ENCODE measurements at regions of chr2 and their contacts with region 1.

Region 1: GRCh38 chr2:133844214-133844892 is 276.1 kb upstream of the NCKAP5 start:
- DNase-seq: no peak
- H3K4me3 ChIP-seq: no peak overlapping the region
- CTCF ChIP-seq: peak; percentile 80

Region 2: GRCh38 chr2:132547074-132547687 is 1297.2 kb before region 1 on chr2:
- CTCF ChIA-PET with region 1: interaction called, 21 read pairs
- POLR2A ChIA-PET with region 1: no interaction called
- DNase-seq: peak; percentile 26
- H3K4me3 ChIP-seq: no peak overlapping the region
- CTCF ChIP-seq: peak; percentile 70

Region 3: DNA sequence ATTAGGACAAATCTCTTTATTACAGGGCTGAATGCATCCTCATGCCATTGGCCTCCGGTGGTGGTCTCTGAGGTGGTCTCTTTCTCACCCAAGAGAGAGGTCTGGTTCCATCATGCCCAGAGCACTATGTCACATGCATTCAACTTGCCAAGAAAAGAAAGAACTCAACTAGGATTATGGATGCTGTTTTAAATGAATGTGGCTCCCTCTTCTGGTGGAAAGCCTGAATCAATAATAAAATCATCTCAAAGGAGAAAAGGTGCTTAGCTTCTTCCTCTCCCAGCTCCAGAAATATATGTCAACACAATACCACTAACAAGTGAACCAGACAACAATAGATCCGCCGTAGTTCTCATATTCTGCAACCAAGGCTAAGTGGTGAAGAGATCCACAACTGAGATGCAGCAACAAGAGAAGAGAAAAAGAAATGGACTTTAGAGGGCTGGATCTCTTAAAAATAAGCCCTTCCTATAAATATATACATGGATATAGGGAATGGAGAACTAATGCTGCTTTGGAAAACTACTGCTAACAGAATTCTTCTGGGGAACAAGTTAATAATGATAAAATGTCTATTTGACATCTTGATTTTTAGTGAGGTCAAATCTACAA is 672.9 kb before region 1 on chr2:
- CTCF ChIA-PET with region 1: interaction called, 19 read pairs
- POLR2A ChIA-PET with region 1: no interaction called
- DNase-seq: no peak
- H3K4me3 ChIP-seq: no peak overlapping the region
- CTCF ChIP-seq: peak; percentile 44

Region 4: DNA sequence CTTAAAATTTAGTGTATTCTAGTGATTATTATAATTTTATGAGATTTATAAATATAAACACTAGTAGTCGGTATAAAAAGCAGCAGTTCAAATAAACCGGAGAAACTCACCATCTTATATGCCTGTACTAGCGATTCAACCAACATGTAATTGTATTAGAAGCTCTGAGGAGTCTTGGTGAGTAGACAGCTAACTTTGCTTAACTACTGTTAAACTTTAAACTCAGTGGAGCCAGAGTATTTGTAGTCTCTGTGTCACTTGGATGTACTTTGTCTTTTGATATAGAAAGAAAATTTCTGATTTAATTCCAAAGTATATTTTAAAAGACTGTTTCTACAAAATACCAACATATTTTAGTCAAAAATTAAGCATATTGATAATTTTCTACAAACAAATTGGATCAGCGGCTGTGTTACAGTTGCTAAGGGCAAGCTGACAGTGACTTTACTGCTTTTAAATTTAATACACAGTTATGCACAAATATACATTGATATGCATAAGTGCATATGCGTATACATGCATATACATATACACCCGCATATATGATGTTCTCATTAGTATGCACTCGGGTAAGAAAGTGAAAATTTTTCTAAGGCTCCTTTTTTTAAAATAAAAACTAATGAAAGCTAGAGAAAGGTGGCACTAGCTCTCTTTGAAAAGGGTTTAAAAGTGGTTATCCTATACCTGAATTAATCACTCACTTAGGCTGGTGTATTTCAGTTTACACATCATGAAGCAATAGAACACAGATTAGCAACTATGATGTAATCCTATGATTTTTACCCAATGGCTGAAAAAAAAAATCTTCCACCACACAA is 650.6 kb before region 1 on chr2:
- CTCF ChIA-PET with region 1: interaction called, 11 read pairs
- POLR2A ChIA-PET with region 1: no interaction called
- DNase-seq: no peak
- H3K4me3 ChIP-seq: no peak overlapping the region
- CTCF ChIP-seq: no peak

Region 5: GRCh38 chr2:133561045-133561852 is 283.1 kb before region 1 on chr2:
- CTCF ChIA-PET with region 1: interaction called, 35 read pairs
- POLR2A ChIA-PET with region 1: no interaction called
- DNase-seq: peak; percentile 57
- H3K4me3 ChIP-seq: no peak overlapping the region
- CTCF ChIP-seq: peak; percentile 67

Region 6: GRCh38 chr2:133765658-133766057 is 78.7 kb before region 1 on chr2:
- CTCF ChIA-PET with region 1: interaction called, 10 read pairs
- POLR2A ChIA-PET with region 1: no interaction called
- DNase-seq: no peak
- H3K4me3 ChIP-seq: no peak overlapping the region
- CTCF ChIP-seq: no peak

Region 7: GRCh38 chr2:133855526-133855925 is 11.2 kb after region 1 on chr2:
- CTCF ChIA-PET with region 1: interaction called, 37 read pairs
- POLR2A ChIA-PET with region 1: no interaction called
- DNase-seq: no peak
- H3K4me3 ChIP-seq: no peak overlapping the region
- CTCF ChIP-seq: no peak